ENCODE measurements at regions of chr3 and their contacts with region 1.

Region 1: DNA sequence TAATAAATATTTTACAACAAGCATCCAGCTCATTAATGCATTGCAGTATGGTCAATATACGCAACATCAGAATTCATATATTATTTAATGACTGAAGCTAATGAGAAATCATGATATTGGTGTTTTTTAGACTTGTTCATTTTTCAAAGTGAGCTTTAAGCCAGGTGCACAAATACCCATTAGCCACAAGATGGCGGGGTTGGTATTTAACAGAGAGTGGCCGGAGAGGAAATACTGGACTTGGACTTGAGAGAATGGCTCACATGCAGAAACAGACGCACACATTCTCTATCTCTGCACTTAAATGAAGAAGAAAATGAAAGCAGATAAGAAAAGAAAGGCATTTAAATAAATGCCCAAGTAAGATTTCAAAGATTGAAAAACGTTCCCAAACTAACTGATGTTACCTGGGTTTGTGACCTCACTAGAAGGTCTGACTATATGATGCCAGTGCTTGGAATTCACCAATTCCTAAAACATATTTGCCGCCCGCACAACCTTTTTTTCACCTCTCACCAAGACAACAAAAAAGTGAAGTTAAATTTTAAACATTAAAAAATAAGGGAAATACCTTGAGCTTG is 21.2 kb upstream of the CRBN start:
- DNase-seq: peak in 6 of 10 donors; percentile 31 to 74 (median 44)
- H3K4me3 ChIP-seq: no peak overlapping the region
- H3K27ac ChIP-seq: peak overlapping the region in 1 of 59 donors; percentile 41
- H3K27me3 ChIP-seq: peaks cover 0 to 3% (median 0%) of the 10 kb centered on the region in 45 donors
- CTCF ChIP-seq: peak; percentile 63 to 94 (median 82)

Region 2: DNA sequence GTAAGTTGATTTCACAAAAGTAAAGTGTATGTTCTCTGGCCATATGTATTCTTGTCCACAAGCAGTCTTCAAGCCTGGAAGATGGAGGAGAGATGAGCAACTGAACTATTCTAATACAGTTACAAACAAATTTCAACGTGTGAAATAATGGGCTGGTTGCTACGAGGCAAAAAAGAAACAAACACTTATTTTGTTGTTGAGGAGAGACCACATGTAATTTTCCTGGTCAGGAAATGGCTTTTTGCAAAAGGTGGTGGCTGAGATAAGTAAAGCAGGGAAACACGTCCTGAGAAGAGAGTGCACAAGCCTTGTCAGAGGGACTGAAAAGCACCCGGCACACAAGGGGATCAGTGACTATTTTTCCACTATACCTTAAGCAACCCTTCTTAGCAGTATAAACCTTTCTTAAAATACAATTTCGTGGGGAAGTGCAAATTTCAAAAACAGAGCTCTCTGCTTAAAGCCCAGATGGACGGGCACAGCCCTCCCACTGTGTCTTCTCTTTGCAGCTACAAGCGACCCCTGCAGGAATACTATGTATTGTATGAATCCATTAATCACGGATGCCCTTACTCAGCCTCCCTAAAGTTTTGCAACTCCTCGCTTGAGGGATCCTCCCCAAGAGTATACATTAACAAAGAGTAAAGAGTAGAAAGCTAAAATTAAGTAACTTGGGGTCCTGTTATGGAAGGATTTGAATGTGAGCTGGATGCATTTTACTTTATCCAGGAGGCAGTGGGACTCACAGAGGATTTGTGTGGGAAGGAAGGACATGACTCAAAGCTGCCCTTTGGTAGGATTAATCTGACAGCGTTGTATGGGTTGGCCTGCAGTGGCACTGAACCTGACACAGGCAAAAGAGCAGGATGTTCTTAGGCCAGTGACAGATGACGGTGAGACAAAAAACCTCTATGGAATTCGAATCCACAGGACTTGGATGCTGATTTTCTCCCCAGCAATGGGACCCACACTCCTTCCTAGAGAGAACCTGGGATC is 344.3 kb before region 1 on chr3:
- intact Hi-C with region 1: no loop called
- DNase-seq: no peak
- H3K4me3 ChIP-seq: no peak overlapping the region
- H3K27ac ChIP-seq: no peak overlapping the region
- H3K27me3 ChIP-seq: no peaks in the 10 kb centered on the region
- CTCF ChIP-seq: no peak

Region 3: GRCh38 chr3:3212781-3213440 is 12.2 kb after region 1 on chr3:
- intact Hi-C with region 1: no loop called
- DNase-seq: no peak
- H3K4me3 ChIP-seq: no peak overlapping the region
- H3K27ac ChIP-seq: no peak overlapping the region
- H3K27me3 ChIP-seq: peaks cover 0 to 3% (median 0%) of the 10 kb centered on the region in 45 donors
- CTCF ChIP-seq: no peak

Region 4: DNA sequence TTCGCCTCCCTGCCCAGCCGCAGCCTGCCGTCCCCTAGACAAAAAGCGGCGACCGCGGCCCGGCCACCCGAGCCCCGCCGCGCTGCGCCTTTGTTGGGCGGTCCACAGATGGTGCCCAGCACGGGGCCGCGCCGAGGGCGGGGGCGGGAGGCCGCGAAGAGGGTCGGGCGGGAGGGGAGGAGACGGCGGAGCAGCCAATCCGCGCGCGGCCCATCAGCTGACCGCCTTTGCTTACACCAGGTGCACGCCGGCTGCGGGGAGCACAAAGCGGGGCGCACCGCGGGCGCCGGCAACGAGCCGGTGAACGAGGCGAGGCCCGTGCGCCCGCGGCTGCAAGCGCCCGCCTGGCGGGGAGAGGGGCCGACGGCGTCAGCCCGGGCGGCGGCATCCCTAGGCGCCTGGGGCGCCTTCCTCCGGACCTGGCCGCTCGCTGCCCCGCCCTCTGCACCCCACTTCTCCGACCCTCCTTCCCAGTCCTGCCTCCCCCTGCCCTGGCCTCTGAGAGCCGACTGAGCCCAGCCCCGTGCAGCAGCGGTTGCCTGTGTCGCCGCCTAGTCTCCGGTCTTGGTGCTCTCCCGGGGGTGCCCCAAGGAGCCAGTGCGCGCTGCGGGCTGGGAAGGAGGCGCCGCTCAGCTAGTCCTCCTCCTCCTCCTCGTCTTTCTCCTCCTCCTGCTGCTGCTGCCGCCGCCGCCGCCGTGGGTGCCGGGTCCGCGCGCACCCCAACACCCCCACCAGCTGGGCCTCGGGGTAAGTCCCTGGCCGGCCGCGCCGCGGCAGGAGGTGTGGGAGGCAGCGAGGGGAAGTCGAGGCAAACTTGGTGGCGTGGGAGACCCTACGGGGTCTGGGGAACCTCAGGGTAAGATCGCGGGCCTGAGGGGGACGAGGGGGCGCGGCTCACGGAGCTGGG is 598.7 kb after region 1 on chr3 and contains the start of gene LRRN1:
- intact Hi-C with region 1: loop called in 1 of 2 experiments (anchors 10 kb)
- DNase-seq: peak; percentile 74 to 98 (median 89)
- H3K4me3 ChIP-seq: peak within 1 kb of the TSS; percentile 47 to 83 (median 72)
- H3K27ac ChIP-seq: peak within 1 kb of the TSS in 53 of 59 donors; percentile 23 to 88 (median 75)
- H3K27me3 ChIP-seq: no peaks in the 10 kb centered on the region
- CTCF ChIP-seq: peak in 4 of 56 donors; percentile 9 to 17 (median 12)
- total RNA-seq, gene LRRN1: 11.3 to 52.5 (median 29.7) TPM

Region 5: GRCh38 chr3:3998140-3998922 is 797.6 kb after region 1 on chr3:
- intact Hi-C with region 1: loop called in 1 of 2 experiments (anchors 2 kb)
- DNase-seq: peak in 1 of 10 donors; percentile 27
- H3K4me3 ChIP-seq: no peak overlapping the region
- H3K27ac ChIP-seq: no peak overlapping the region
- H3K27me3 ChIP-seq: no peaks in the 10 kb centered on the region
- CTCF ChIP-seq: peak in 55 of 56 donors; percentile 31 to 71 (median 58)

Region 6: GRCh38 chr3:4271834-4272233 is 1071.1 kb after region 1 on chr3:
- intact Hi-C with region 1: loop called (anchors 5 to 10 kb)
- DNase-seq: no peak
- H3K4me3 ChIP-seq: no peak overlapping the region
- H3K27ac ChIP-seq: no peak overlapping the region
- H3K27me3 ChIP-seq: no peaks in the 10 kb centered on the region
- CTCF ChIP-seq: peak; percentile 29 to 78 (median 62)

Region 7: GRCh38 chr3:4290272-4290893 is 1089.7 kb after region 1 on chr3:
- intact Hi-C with region 1: loop called (anchors 5 kb)
- DNase-seq: peak in 4 of 10 donors; percentile 15 to 61 (median 30)
- H3K4me3 ChIP-seq: no peak overlapping the region
- H3K27ac ChIP-seq: no peak overlapping the region
- H3K27me3 ChIP-seq: no peaks in the 10 kb centered on the region
- CTCF ChIP-seq: peak; percentile 80 to 98 (median 92)

Measured in dorsolateral prefrontal cortex (tissue), 120 donors.